CD8-positive, alpha-beta memory T cell (primary cell): ENCODE measurements at regions of chr18 and their contacts with region 1.

Region 1: DNA sequence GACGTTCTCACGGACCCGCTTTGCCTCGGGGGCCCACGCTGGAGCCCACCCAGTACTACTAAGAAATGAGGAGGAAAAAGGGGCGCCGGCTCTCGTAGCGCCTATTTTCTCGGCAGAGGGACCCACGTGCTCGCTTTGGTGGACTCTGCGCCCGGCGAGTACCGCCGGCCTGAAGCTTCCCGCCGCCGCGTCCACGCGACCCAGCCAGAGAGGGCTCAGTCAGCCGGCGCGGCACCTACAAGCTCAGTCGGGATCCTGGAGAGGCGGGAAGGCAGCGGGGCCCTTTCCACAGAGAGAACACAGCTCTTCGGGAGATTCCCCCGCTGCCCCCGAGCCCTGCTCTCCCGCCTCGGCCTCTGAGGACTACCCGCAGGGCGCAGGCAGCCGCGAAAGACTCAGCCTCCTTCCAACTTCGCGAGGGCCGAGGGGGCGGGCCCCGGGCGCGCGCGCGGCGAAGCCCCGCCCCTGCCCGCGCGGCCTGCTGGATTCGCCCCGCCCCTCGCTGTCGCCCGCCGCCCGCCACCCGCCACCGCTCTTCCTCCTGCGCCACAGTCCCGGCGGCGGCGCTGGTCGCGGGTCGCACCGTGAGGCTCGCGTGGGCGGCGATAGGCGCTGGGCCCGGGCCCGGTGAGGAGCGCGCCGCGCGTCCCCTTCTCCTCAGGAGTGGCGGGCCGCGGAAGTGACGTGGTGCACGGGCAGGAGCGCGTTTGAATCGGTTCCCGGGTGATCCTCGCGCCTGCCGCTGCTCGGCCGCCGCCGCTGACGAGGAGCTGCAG is at the start of gene SMCHD1:
- DNase-seq: peak; percentile 81 to 94 (median 88)
- H3K4me3 ChIP-seq: peak within 1 kb of the TSS; percentile 85
- H3K4me3 Mint-ChIP-seq: peak within 1 kb of the TSS; percentile 94 to 99 (median 98)
- H3K27ac ChIP-seq: peak within 1 kb of the TSS; percentile 98
- H3K27ac Mint-ChIP-seq: peak within 1 kb of the TSS; percentile 93 to 99 (median 98)
- H3K4me1 ChIP-seq: peaks cover 31% of the 10 kb centered on the region
- H3K4me1 Mint-ChIP-seq: peaks cover 36 to 39% (median 39%) of the 10 kb centered on the region in 3 donors
- H3K27me3 ChIP-seq: no peaks in the 10 kb centered on the region
- H3K27me3 Mint-ChIP-seq: peaks cover 0 to 5% of the 10 kb centered on the region in 2 donors
- total RNA-seq, gene SMCHD1: 89.5 to 93.7 TPM

Region 2: GRCh38 chr18:2571200-2572143 is 83.9 kb before region 1 on chr18 and contains the starts of genes METTL4 and NDC80:
- CTCF ChIA-PET with region 1: interaction called, 23 read pairs
- POLR2A ChIA-PET with region 1: interaction called, 43 read pairs
- DNase-seq: peak; percentile 73 to 89 (median 79)
- H3K4me3 ChIP-seq: peak within 1 kb of the TSS; percentile 98
- H3K4me3 Mint-ChIP-seq: peak within 1 kb of the TSS; percentile 98 to 100 (median 99)
- H3K27ac ChIP-seq: peak within 1 kb of the TSS; percentile 100
- H3K27ac Mint-ChIP-seq: peak within 1 kb of the TSS; percentile 98 to 100 (median 100)
- H3K4me1 ChIP-seq: peaks cover 28% of the 10 kb centered on the region
- H3K4me1 Mint-ChIP-seq: peaks cover 54 to 80% (median 74%) of the 10 kb centered on the region in 3 donors
- H3K27me3 ChIP-seq: no peaks in the 10 kb centered on the region
- H3K27me3 Mint-ChIP-seq: peaks cover 0 to 2% of the 10 kb centered on the region in 2 donors
- total RNA-seq, gene METTL4: 21.4 to 22.8 TPM
- total RNA-seq, gene NDC80: 41.6 to 44.4 TPM

Region 3: DNA sequence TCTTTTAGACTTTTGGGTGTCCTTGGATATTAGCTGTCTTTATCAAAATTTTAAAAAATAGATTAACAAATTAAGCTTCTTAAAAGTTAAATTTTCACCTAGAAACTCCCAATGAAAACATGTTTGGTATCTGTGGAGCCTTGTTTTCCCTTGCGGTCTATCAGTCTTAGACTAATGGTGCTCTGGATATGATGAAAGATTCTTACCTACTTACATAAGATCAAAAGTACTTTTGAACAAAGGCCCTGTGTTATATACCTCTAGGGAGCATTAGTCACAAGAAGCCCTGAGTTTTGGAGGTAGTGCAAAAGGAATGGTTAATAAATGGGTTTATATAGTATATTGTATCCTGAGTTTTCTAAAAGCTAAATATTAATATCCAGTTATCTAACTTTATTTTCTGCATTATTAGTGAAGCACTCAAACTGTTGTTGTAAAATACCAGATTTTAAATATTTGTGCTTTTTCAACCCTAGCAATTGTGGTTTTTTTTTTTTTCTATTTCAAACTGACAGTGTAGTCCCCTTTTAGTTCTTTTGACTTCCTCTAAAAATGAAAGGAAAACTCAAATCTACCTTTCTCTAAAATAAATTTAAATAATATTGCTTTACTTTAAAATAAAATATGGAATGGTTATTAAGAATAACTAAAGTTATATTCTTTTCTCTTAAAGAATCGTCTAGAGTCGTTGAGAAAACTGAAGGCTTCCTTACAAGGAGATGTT is 65.9 kb before region 1 on chr18:
- CTCF ChIA-PET with region 1: interaction called, 6 read pairs
- POLR2A ChIA-PET with region 1: interaction called, 22 read pairs
- DNase-seq: peak in 2 of 5 donors; percentile 25 to 46
- H3K4me3 ChIP-seq: peak overlapping the region; percentile 64
- H3K4me3 Mint-ChIP-seq: peak overlapping the region; percentile 70 to 85 (median 80)
- H3K27ac ChIP-seq: no peak overlapping the region
- H3K27ac Mint-ChIP-seq: peak overlapping the region; percentile 68 to 97 (median 93)
- H3K4me1 ChIP-seq: peaks cover 43% of the 10 kb centered on the region
- H3K4me1 Mint-ChIP-seq: peaks cover 33 to 56% (median 55%) of the 10 kb centered on the region in 3 donors
- H3K27me3 ChIP-seq: no peaks in the 10 kb centered on the region
- H3K27me3 Mint-ChIP-seq: no peaks in the 10 kb centered on the region

Region 4: GRCh38 chr18:2606335-2606734 is 49.0 kb before region 1 on chr18:
- CTCF ChIA-PET with region 1: interaction called, 16 read pairs
- POLR2A ChIA-PET with region 1: interaction called, 35 read pairs
- DNase-seq: peak in 2 of 5 donors; percentile 44 to 46
- H3K4me3 ChIP-seq: no peak overlapping the region
- H3K4me3 Mint-ChIP-seq: peak overlapping the region; percentile 61 to 78 (median 71)
- H3K27ac ChIP-seq: peak overlapping the region; percentile 3
- H3K27ac Mint-ChIP-seq: peak overlapping the region; percentile 61 to 95 (median 92)
- H3K4me1 ChIP-seq: peaks cover 38% of the 10 kb centered on the region
- H3K4me1 Mint-ChIP-seq: peaks cover 49 to 72% (median 64%) of the 10 kb centered on the region in 3 donors
- H3K27me3 ChIP-seq: no peaks in the 10 kb centered on the region
- H3K27me3 Mint-ChIP-seq: no peaks in the 10 kb centered on the region

Region 5: GRCh38 chr18:2636126-2636631 is 19.2 kb before region 1 on chr18:
- CTCF ChIA-PET with region 1: interaction called, 53 read pairs
- POLR2A ChIA-PET with region 1: interaction called, 229 read pairs
- DNase-seq: no peak
- H3K4me3 ChIP-seq: peak overlapping the region; percentile 51
- H3K4me3 Mint-ChIP-seq: peak overlapping the region; percentile 81 to 88 (median 86)
- H3K27ac ChIP-seq: peak overlapping the region; percentile 82
- H3K27ac Mint-ChIP-seq: peak overlapping the region; percentile 97 to 99 (median 98)
- H3K4me1 ChIP-seq: peaks cover 68% of the 10 kb centered on the region
- H3K4me1 Mint-ChIP-seq: peaks cover 93 to 100% (median 95%) of the 10 kb centered on the region in 3 donors
- H3K27me3 ChIP-seq: no peaks in the 10 kb centered on the region
- H3K27me3 Mint-ChIP-seq: no peaks in the 10 kb centered on the region

Region 6: GRCh38 chr18:2641638-2642037 is 13.7 kb before region 1 on chr18:
- CTCF ChIA-PET with region 1: interaction called, 53 read pairs
- POLR2A ChIA-PET with region 1: interaction called, 229 read pairs
- DNase-seq: peak in 2 of 5 donors; percentile 49 to 59
- H3K4me3 ChIP-seq: peak overlapping the region; percentile 32
- H3K4me3 Mint-ChIP-seq: peak overlapping the region; percentile 55 to 89 (median 77)
- H3K27ac ChIP-seq: peak overlapping the region; percentile 14
- H3K27ac Mint-ChIP-seq: peak overlapping the region in 7 of 8 donors; percentile 85 to 99 (median 96)
- H3K4me1 ChIP-seq: peaks cover 81% of the 10 kb centered on the region
- H3K4me1 Mint-ChIP-seq: peaks cover 48 to 55% (median 55%) of the 10 kb centered on the region in 3 donors
- H3K27me3 ChIP-seq: no peaks in the 10 kb centered on the region
- H3K27me3 Mint-ChIP-seq: no peaks in the 10 kb centered on the region

Region 7: GRCh38 chr18:2857491-2858131 is 202.2 kb after region 1 on chr18:
- CTCF ChIA-PET with region 1: no interaction called
- POLR2A ChIA-PET with region 1: no interaction called
- DNase-seq: no peak
- H3K4me3 ChIP-seq: no peak overlapping the region
- H3K4me3 Mint-ChIP-seq: no peak overlapping the region
- H3K27ac ChIP-seq: no peak overlapping the region
- H3K27ac Mint-ChIP-seq: no peak overlapping the region
- H3K4me1 ChIP-seq: no peaks in the 10 kb centered on the region
- H3K4me1 Mint-ChIP-seq: peaks cover 0 to 4% (median 2%) of the 10 kb centered on the region in 3 donors
- H3K27me3 ChIP-seq: no peaks in the 10 kb centered on the region
- H3K27me3 Mint-ChIP-seq: peaks cover 1 to 27% of the 10 kb centered on the region in 2 donors

Region 8: GRCh38 chr18:2920546-2921343 is 265.4 kb after region 1 on chr18:
- CTCF ChIA-PET with region 1: no interaction called
- POLR2A ChIA-PET with region 1: no interaction called
- DNase-seq: no peak
- H3K4me3 ChIP-seq: no peak overlapping the region
- H3K4me3 Mint-ChIP-seq: no peak overlapping the region
- H3K27ac ChIP-seq: no peak overlapping the region
- H3K27ac Mint-ChIP-seq: peak overlapping the region in 6 of 8 donors; percentile 8 to 81 (median 40)
- H3K4me1 ChIP-seq: no peaks in the 10 kb centered on the region
- H3K4me1 Mint-ChIP-seq: peaks cover 11 to 13% (median 11%) of the 10 kb centered on the region in 3 donors
- H3K27me3 ChIP-seq: no peaks in the 10 kb centered on the region
- H3K27me3 Mint-ChIP-seq: peaks cover 0 to 1% of the 10 kb centered on the region in 2 donors